ENCODE measurements at regions of chr21 and their contacts with region 1.

Region 1: DNA sequence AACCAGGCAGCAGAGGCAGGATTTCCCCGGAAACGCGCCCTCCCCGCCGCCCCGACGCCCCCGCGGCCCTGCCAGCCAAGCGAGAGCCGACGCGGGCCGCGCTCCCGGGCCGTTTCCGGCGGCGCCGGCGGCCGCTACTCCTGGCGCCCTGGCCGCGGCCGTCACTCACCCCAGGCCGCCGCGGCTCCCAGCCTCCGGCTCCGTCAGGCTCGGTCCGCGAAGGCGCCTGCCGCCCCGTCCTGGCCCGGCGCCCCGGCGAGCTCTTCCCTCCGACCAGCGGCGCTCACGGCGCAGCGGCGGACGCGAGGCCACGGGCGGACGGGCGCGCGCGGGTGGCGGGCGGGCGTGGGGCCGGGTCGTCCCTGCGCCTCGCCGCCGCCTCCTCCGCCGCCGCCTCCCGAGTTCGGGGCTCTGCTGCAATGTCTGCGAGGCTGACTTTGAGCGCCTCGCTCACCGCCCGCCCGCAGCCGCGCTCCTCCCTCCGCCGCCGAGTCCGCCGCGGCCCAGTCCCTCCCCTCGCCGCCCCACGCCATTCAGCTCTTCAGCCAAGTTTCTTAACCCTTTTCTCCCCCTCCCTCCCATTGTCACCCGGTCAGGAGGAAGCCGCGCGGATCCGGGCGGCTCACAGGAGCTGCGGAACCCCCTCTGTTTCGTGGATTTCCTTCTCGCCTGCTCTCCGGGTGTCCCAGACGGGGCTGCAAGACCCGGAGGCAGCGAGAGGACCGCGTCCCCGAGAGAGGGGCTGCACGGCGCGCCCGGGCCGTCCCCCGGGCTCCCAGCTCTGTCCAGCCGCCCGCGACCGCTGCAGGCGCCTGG is at the start of gene NRIP1:
- DNase-seq: peak; percentile 84
- ATAC-seq: peak; percentile 84
- H3K4me3 Mint-ChIP-seq: peak within 1 kb of the TSS; percentile 98
- H3K27ac Mint-ChIP-seq: peak within 1 kb of the TSS; percentile 96
- H3K4me1 Mint-ChIP-seq: peaks cover 48% of the 10 kb centered on the region
- H3K27me3 Mint-ChIP-seq: no peaks in the 10 kb centered on the region
- CTCF ChIP-seq: no peak
- total RNA-seq, gene NRIP1: 24.6 and 26.6 TPM in 2 replicates

Region 2: DNA sequence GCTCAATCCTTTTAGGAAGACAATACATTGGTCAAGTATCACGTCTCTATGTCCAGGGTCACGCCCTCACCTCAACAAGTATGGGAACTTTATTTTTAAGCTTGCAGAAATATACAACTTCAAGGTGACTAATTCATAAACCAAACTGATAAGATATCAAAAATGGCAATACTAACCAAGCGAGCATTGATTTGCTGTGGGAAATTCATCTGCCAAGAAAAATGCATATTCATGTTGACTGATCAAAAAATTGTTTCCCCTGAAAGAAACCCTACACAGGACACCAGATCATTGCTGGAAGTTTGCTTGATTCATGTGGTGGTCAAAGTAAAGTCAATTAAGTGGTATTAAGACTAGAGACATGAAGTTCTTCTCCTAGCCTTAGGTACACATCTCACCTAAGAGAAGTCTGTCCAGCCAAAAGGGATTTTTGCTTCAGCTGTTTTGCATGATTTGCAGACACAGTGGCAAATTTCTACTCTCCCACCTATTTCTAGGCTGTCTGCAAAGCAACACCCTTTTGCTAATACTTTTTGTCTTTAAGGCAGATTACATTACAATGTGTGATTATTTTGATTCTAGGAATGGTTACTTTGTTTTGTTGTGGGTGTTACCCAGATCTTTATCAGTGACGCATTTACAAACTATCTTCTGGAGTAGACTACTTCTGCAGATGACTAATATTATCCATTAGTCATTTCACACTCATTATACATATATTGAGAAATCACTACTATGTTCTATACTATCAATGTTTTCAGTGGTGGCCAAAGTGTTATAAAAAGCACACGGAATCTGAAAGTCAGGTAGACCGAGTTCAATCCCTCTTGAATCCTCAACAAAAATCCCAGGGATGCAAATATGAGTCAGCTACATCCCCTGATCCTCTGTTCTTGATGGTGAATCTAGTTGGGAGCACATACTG is 531.0 kb before region 1 on chr21:
- CTCF ChIA-PET with region 1: no interaction called
- POLR2A ChIA-PET with region 1: interaction called, 3 read pairs
- intact Hi-C with region 1: loop called (anchors 5 kb)
- DNase-seq: no peak
- ATAC-seq: peak; percentile 85
- H3K4me3 Mint-ChIP-seq: peak overlapping the region; percentile 71
- H3K27ac Mint-ChIP-seq: peak overlapping the region; percentile 98
- H3K4me1 Mint-ChIP-seq: peaks cover 79% of the 10 kb centered on the region
- H3K27me3 Mint-ChIP-seq: no peaks in the 10 kb centered on the region
- CTCF ChIP-seq: no peak

Region 3: DNA sequence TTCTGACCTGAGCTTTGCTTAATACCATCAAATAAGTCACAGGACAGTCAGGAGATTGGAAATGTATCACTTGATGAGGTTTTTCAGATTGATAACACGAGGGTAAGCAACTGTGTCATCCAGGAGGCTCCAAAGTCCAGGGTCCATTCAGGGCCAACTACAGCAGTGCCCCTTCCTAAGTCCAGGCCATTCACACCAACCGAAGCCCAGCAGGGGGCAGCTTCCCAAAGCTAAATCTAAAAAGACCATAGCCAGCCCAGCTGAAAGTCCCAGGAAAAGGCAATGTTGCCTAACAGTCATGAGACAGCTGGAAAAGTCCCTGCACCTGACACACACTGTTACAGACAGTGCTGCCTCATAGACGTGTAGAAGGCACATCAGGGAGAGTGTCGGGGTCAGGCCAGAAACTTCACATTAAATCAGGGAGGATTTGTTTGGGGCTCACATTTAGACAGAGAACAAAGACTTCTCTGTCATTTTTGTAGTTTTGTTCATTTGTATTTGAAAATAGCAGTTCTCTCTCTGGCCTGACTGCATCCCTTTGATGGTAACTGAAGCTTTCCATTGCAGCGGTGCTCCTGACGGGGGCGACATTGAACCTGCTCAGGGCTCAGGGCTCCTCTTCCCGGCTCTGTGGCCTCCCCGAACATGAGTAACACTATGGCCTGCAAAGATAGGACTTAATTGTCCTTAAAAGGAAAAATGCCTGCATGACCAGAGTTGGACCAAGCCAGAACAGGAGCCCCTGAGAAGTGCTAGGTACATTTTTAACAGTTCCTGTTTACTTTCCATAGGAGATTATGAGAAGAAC is 200.4 kb before region 1 on chr21:
- CTCF ChIA-PET with region 1: interaction called, 3 read pairs
- POLR2A ChIA-PET with region 1: no interaction called
- intact Hi-C with region 1: loop called (anchors 1 kb)
- DNase-seq: no peak
- ATAC-seq: peak; percentile 64
- H3K4me3 Mint-ChIP-seq: no peak overlapping the region
- H3K27ac Mint-ChIP-seq: no peak overlapping the region
- H3K4me1 Mint-ChIP-seq: peaks cover 49% of the 10 kb centered on the region
- H3K27me3 Mint-ChIP-seq: no peaks in the 10 kb centered on the region
- CTCF ChIP-seq: no peak

Region 4: GRCh38 chr21:15045017-15045416 is 19.8 kb before region 1 on chr21:
- CTCF ChIA-PET with region 1: no interaction called
- POLR2A ChIA-PET with region 1: interaction called, 5 read pairs
- intact Hi-C with region 1: loop called (anchors 2 kb)
- DNase-seq: no peak
- ATAC-seq: no peak
- H3K4me3 Mint-ChIP-seq: no peak overlapping the region
- H3K27ac Mint-ChIP-seq: no peak overlapping the region
- H3K4me1 Mint-ChIP-seq: peaks cover 52% of the 10 kb centered on the region
- H3K27me3 Mint-ChIP-seq: no peaks in the 10 kb centered on the region
- CTCF ChIP-seq: no peak

Region 5: DNA sequence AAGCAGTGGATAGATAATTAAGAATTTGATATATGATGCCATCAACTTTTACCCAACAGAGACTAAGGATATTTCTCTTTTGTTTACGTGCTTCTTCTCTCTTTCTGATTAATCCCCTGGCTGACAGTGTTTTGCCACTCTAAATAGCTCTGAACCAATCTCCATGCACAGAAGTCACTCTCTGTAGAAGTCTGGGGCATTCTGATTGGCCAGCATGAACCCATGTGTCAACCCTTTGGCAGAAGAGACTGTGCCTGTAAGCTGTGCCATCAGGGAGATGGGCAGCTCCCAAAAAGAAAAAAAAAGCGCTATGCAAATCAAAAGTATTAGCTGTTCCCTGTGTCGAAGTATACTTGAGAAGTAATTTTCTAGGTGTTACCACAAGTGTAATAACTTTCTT is 34.1 kb after region 1 on chr21:
- CTCF ChIA-PET with region 1: no interaction called
- POLR2A ChIA-PET with region 1: no interaction called
- intact Hi-C with region 1: no loop called
- DNase-seq: no peak
- ATAC-seq: no peak
- H3K4me3 Mint-ChIP-seq: no peak overlapping the region
- H3K27ac Mint-ChIP-seq: no peak overlapping the region
- H3K4me1 Mint-ChIP-seq: no peaks in the 10 kb centered on the region
- H3K27me3 Mint-ChIP-seq: no peaks in the 10 kb centered on the region
- CTCF ChIP-seq: no peak

Region 6: DNA sequence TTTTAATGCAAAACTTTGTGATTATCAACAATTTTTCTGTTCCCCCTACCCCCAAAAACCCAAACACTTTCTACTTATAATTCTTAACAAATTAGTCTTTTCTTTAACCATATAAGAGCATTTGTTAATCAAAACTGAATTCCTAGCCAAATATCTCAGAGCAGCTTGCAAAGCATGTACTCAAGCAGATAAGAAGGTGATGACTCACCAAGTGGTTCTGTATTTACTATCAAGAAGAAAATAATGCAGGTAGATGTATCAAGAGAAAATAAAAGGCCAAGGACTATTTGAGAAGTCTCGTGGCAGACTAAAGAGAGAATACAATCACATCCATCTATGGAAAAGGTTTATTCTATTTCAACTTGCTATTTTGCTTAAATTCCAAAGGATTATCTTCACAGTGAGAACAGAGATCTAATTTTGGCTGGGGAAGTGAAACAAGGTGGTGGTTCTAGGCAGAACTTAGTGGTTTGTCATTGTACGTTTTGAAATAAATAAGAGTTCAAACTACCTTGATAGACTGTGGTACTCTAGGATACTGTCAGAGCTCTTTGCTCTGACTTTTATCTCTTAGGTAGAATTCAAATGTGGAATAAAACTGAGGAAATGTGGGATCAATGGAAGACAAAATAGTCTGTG is 94.7 kb after region 1 on chr21:
- CTCF ChIA-PET with region 1: no interaction called
- POLR2A ChIA-PET with region 1: interaction called, 8 read pairs
- intact Hi-C with region 1: loop called (anchors 1 kb)
- DNase-seq: no peak
- ATAC-seq: peak; percentile 90
- H3K4me3 Mint-ChIP-seq: peak overlapping the region; percentile 33
- H3K27ac Mint-ChIP-seq: peak overlapping the region; percentile 63
- H3K4me1 Mint-ChIP-seq: peaks cover 23% of the 10 kb centered on the region
- H3K27me3 Mint-ChIP-seq: peaks cover 3% of the 10 kb centered on the region
- CTCF ChIP-seq: no peak

Region 7: GRCh38 chr21:15183813-15184257 is 119.1 kb after region 1 on chr21:
- CTCF ChIA-PET with region 1: no interaction called
- POLR2A ChIA-PET with region 1: no interaction called
- intact Hi-C with region 1: no loop called
- DNase-seq: no peak
- ATAC-seq: no peak
- H3K4me3 Mint-ChIP-seq: no peak overlapping the region
- H3K27ac Mint-ChIP-seq: no peak overlapping the region
- H3K4me1 Mint-ChIP-seq: no peaks in the 10 kb centered on the region
- H3K27me3 Mint-ChIP-seq: no peaks in the 10 kb centered on the region
- CTCF ChIP-seq: no peak

Region 8: DNA sequence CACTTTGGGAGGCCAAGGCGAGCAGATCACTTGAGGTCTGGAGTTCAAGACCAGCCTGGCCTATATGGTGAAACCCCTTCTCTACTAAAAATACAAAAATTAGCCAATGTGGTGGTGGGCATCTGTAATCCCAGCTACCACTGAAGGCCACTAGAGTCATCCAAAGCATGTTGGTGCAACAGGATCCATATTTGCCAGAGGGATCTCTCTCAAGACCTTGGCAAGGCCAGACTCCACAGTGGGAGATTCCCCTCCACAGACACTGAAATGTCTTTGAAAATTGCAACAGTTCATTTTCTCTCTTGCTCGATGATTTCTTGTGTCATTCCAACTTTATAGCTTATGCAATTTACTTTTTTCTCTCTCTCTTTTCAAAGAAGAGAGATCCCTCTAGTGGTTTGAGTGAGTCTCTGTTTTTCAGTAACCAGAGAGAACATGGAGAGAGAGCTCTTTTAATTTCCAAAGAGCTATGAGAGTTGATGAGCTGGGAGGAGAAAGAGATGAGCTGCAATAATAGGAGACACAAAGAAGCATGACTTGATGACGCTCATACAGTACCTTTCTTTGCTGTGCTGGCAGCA is 488.2 kb after region 1 on chr21:
- CTCF ChIA-PET with region 1: no interaction called
- POLR2A ChIA-PET with region 1: no interaction called
- intact Hi-C with region 1: loop called (anchors 5 kb)
- DNase-seq: no peak
- ATAC-seq: no peak
- H3K4me3 Mint-ChIP-seq: no peak overlapping the region
- H3K27ac Mint-ChIP-seq: no peak overlapping the region
- H3K4me1 Mint-ChIP-seq: peaks cover 2% of the 10 kb centered on the region
- H3K27me3 Mint-ChIP-seq: peaks cover 4% of the 10 kb centered on the region
- CTCF ChIP-seq: no peak

Measured in activated B cell treated with CpG ODN at 0.5 μM for 24 hours (primary cell).